SK-N-SH (cell line): ENCODE measurements at regions of chr18 and their contacts with region 1.

Region 1: DNA sequence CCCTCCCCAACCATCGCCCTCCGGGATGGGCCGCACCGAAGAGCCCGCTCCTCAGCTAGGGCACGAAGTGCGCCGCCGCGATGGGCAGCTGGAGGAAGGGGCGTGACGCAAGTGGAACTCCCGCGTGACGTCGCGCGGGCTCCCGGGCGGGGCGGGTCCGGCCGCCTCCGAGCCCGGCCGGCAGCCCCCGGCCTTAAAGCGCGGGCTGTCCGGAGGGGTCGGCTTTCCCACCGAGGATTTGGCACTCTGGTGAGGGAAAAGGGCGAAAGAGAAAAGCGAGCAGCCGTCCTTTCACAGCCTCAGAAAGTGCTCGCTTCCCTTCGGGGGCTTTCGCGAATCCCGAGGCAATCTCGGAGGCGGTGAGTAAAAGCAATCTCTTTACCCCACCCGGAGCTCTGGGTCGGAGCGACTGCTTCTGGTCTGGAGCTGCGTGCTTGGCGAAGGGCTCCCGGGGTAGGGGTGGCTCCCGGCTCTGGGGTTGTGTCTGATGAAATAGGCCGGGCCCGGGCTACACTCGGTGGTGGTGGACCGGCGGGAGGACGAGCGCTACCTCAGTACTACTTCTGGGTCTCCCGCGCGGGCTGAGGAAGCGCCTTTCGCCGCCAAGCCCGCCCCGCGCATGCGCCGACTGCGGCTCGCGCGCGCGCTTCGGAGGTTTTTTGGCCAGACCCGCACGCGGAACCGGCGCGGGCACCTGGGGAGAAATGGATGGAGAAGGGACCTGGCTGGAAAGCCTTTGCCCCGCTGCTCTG is at the start of gene RBBP8:
- DNase-seq: peak; percentile 93
- H3K4me3 ChIP-seq: peak within 1 kb of the TSS; percentile 81 to 95
- H3K27ac ChIP-seq: peak within 1 kb of the TSS; percentile 93 to 94
- H3K4me1 ChIP-seq: peaks cover 5 to 8% of the 10 kb centered on the region in 2 experiments; a peak in 3 of 4 replicates
- H3K27me3 ChIP-seq: no peaks in the 10 kb centered on the region
- CTCF ChIP-seq: no peak
- EP300 ChIP-seq: 0 out of 4 replicates have a peak, but pooled peaks of 1 of the 2 experiments have one; percentile 19
- RAD21 ChIP-seq: no peak
- polyA plus RNA-seq, gene RBBP8: 9.6 and 11.5 TPM in 2 replicates

Region 2: DNA sequence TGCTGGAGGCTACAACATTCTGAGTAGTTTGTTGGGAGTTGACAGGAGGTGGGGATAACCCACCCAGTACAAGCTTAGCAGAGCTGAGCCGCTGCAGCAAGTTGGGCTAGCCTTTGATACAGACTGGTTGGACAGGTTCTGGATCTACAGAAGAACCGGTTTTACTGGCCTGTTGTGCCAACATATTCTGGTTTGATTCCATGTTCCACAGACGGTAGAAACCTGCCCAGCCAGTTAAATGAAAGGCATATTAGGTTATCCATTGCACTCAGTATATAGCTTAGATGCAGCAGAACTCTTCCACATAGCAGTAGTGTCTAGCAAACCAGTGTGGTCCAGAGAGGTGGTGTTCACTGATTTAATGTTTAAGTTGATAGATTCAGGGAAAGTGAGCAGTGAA is 19.5 kb before region 1 on chr18:
- CTCF ChIA-PET with region 1: interaction called, 44 read pairs
- POLR2A ChIA-PET with region 1: no interaction called
- DNase-seq: no peak
- H3K4me3 ChIP-seq: no peak overlapping the region
- H3K27ac ChIP-seq: no peak overlapping the region
- H3K4me1 ChIP-seq: no peaks in the 10 kb centered on the region
- H3K27me3 ChIP-seq: no peaks in the 10 kb centered on the region
- CTCF ChIP-seq: no peak
- EP300 ChIP-seq: no peak
- RAD21 ChIP-seq: no peak